ENCODE measurements at regions of chr1 and their contacts with region 1.

Region 1: DNA sequence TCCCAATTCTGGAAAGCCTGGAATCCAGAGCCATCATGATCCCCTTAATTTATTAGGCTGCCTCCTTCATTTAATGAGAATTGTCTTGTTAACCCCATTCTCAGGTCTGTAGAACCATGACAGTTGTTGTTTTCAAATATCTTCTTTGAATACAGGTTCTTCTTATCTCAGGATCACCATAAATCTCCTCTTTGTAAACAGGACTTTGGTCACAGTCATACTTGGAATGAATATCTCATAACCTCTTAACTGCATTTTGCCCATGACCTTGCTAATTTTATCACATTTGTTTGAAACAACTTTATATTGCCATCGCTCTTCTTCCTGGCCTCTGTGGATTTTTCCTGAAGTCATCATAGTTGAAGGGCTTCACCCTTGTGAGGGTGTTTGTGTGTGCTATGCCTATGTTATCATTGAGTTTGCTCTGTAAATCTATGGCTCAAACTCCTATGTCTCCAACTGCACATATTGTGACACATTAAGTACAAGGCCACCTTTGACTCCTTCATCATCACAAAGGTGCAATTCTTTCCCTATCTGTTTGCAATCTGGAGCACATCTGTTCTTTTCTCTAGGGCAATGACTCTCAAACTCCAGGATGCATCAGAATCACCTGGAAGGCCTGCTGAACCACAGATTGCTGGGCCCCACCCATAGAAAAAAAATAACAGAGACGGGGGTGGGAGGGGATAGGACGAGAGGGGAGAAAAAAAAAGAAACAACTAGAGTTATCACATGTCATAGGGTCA is 54.2 kb downstream of the FCRL5 start:
- DNase-seq: no peak
- ATAC-seq: no peak

Region 2: DNA sequence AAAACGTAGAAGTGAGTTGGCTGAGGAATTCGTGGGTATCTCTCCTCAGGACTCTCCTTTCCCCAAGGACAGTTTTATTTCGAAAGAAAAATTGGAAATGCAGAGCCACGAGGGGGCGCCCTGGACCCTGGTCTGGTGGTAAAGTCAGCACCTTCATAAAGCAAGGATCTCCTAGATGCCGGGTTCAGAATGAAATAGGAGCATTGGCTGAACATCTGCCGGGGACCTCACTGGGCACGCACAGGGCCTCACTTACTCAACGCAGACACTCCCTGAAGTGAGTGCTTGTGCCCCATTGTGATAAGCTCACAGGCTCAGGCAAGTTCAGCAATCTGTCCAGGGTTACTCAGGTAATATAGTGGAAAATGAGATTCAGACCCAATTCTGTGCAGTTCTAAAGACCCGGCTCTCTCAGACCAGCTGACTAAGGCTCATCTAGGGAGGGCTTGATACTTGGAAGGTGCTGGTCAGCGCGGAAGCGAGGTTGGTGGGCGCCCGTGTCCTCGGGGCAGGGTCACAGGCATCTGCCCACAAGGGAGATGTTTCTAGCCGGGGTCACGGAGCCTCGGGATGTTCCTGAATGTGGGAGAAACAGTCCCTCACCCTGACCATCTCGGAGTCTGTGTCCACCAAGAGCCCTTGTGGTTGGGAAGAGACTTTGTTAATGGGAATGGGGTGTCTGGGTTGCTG is 304.3 kb before region 1 on chr1:
- intact Hi-C with region 1: loop called (anchors 2 kb)
- DNase-seq: no peak
- ATAC-seq: no peak